CD14-positive monocyte (primary cell): ENCODE measurements at regions of chr1 and their contacts with region 1.

Region 1: GRCh38 chr1:212035123-212035834 is at the starts of genes DTL and INTS7:
- DNase-seq: peak; percentile 99
- H3K4me3 ChIP-seq: peak within 1 kb of the TSS; percentile 88 to 97 (median 91)
- H3K4me3 Mint-ChIP-seq: peak within 1 kb of the TSS; percentile 98 to 99
- H3K27ac ChIP-seq: peak within 1 kb of the TSS; percentile 74 to 83
- H3K27ac Mint-ChIP-seq: peak within 1 kb of the TSS; percentile 94 to 98 (median 98)
- H3K4me1 ChIP-seq: peaks cover 28 to 43% of the 10 kb centered on the region in 2 donors
- H3K4me1 Mint-ChIP-seq: peaks cover 58% of the 10 kb centered on the region
- H3K27me3 ChIP-seq: no peaks in the 10 kb centered on the region
- H3K27me3 Mint-ChIP-seq: no peaks in the 10 kb centered on the region
- CTCF ChIP-seq: peak; percentile 95
- polyA plus RNA-seq, gene DTL: not detected
- polyA plus RNA-seq, gene INTS7: 6.1 to 10.7 (median 7.6) TPM

Region 2: GRCh38 chr1:211680752-211681327 is 354.4 kb before region 1 on chr1:
- intact Hi-C with region 1: loop called in 1 of 2 experiments (anchors 10 kb)
- DNase-seq: peak; percentile 64 to 76 (median 76)
- H3K4me3 ChIP-seq: no peak overlapping the region
- H3K4me3 Mint-ChIP-seq: no peak overlapping the region
- H3K27ac ChIP-seq: no peak overlapping the region
- H3K27ac Mint-ChIP-seq: peak overlapping the region in 1 of 7 donors; percentile 29
- H3K4me1 ChIP-seq: peaks cover 2 to 4% of the 10 kb centered on the region in 2 donors
- H3K4me1 Mint-ChIP-seq: peaks cover 8% of the 10 kb centered on the region
- H3K27me3 ChIP-seq: no peaks in the 10 kb centered on the region
- H3K27me3 Mint-ChIP-seq: peaks cover 0 to 7% (median 5%) of the 10 kb centered on the region in 3 donors
- CTCF ChIP-seq: peak; percentile 77